Activated T-helper 2 cell treated with anti-CD3 and anti-CD28 coated beads, Interferon-gamma antibody, Interleukin-2, Interleukin-4, amounts not matched to agents 10 μg/mL and 5 μg/mL and 100 μg/mL, durations not matched to agents 14 hours and 24 hours and 36 hours (primary cell): ENCODE measurements at regions of chr5 and their contacts with region 1.

Region 1: DNA sequence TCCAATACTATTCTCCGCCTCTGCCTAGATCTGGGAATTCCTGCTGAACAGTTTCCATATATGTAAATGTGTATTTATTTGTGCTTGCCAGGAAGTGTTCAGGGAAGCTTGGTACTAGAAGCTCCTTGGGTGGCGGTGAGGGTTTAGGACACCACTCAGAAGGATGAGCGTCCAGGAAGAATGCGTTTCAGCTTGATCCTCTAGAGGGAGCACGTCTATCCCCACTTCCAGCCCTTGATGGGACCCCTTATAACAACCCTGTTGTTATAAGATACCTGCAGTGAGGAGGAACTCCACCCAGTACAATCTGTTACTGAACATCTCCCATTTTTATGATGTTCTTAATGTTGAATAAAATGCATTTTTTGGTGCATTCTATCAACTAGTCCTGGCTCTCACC is 88.9 kb downstream of the CYFIP2 start:
- DNase-seq: no peak
- H3K4me3 Mint-ChIP-seq: no peak overlapping the region
- H3K27ac Mint-ChIP-seq: no peak overlapping the region
- H3K4me1 Mint-ChIP-seq: peaks cover 35% of the 10 kb centered on the region
- H3K27me3 Mint-ChIP-seq: no peaks in the 10 kb centered on the region

Region 2: GRCh38 chr5:156431956-156432829 is 922.6 kb before region 1 on chr5:
- intact Hi-C with region 1: no loop called
- DNase-seq: no peak
- H3K4me3 Mint-ChIP-seq: no peak overlapping the region
- H3K27ac Mint-ChIP-seq: no peak overlapping the region
- H3K4me1 Mint-ChIP-seq: peaks cover 3% of the 10 kb centered on the region
- H3K27me3 Mint-ChIP-seq: peaks cover 3% of the 10 kb centered on the region

Region 3: DNA sequence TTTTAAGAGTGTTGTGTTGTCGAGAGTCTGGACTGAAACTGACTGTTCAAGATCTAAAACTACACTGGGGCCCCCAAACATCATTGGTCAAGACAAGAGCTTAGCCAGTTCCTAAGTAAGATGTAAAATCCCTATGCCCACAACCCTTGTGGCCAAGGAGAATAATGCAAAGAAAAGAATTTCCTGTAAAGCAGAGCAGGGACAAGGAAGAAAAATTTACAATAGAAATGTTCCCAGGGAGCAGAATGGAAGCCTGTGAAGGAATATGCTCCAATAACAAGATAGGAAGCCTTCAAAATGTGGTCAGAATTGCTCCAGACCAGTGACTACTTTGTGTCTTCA is 484.3 kb before region 1 on chr5:
- intact Hi-C with region 1: no loop called
- DNase-seq: no peak
- H3K4me3 Mint-ChIP-seq: no peak overlapping the region
- H3K27ac Mint-ChIP-seq: no peak overlapping the region
- H3K4me1 Mint-ChIP-seq: peaks cover 17% of the 10 kb centered on the region
- H3K27me3 Mint-ChIP-seq: no peaks in the 10 kb centered on the region

Region 4: DNA sequence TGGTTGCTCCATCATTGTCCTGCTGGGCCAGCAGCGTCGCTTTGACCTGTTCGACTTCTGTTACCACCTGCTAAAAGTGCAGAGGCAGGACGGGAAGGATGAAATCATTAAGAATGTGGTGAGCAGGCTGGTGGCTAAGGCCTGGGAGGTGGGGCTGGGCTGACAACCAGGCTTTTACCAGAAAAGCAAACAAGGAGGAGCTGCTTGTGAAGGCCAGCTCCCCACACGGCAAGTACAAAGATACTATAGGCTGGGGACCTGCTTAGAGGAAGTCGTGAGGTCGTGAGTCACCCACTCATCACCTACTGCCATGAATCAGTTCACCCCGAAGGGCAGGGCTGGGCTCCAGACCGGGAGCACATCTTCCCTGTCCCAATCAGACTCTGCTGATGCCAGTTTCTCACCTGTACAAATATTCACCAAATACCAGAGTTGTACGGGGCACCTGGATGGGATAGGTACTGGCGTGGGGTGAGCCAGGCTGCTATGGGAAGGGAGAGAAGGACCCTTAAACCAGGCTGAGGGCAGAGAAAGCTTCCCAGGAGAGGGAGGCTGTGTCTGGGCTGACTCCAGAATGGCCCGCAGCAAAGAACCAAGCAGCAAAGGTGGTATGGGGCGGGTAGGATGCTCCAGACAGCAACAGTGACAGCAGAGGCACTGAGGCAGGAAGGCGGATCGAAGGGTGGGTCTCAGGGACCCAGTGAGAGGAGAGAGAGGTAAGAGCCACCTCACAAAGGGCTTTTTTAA is 35.9 kb after region 1 on chr5:
- intact Hi-C with region 1: loop called (anchors 5 kb)
- DNase-seq: peak; percentile 42
- H3K4me3 Mint-ChIP-seq: no peak overlapping the region
- H3K27ac Mint-ChIP-seq: peak overlapping the region; percentile 96
- H3K4me1 Mint-ChIP-seq: peaks cover 16% of the 10 kb centered on the region
- H3K27me3 Mint-ChIP-seq: no peaks in the 10 kb centered on the region

Region 5: DNA sequence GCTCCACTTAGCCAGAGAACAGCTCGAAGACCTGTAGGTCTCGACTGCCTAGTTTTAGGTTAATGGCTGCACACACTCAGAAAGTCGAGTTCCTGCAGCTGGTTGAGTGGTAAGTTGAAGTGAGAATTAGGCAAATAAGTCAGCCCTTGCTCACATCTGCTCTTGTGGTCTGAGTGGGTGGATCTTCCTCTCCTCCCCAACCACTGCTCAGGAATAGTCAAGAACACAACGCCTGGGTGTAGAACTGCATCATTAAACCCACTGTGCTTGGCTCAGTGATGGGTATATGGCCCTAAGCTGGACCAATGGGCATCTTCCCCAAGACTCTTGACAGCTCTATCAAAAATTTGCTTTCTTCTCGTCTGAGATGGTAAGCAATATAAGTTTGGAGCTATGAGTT is 241.7 kb after region 1 on chr5:
- intact Hi-C with region 1: loop called (anchors 5 kb)
- DNase-seq: peak; percentile 49
- H3K4me3 Mint-ChIP-seq: no peak overlapping the region
- H3K27ac Mint-ChIP-seq: peak overlapping the region; percentile 21
- H3K4me1 Mint-ChIP-seq: peaks cover 90% of the 10 kb centered on the region
- H3K27me3 Mint-ChIP-seq: no peaks in the 10 kb centered on the region